MCF 10A (cell line): ENCODE measurements at regions of chr4 and their contacts with region 1.

Region 1: DNA sequence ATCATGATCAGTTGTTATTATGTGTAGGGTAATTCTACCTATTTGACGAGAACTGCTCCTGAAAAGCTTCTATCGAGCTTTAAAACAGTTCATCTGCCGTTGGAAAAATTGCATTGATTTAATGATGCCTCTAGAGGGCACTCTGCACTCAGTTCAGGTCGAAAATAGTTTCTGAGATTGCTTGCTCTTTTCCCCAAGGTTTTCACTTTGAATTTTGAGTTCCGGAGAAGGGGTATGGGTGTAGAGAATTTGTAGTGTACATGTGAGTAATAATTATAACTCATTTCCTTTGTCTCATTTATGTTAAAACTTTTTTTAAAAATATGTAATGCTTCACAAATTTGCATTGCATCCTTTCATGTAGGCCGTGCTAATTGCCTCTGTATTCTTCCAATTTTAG is 28.4 kb upstream of the TNIP3 start:
- DNase-seq: peak; percentile 68
- H3K4me3 Mint-ChIP-seq: peak overlapping the region; percentile 69
- H3K27ac Mint-ChIP-seq: no peak overlapping the region
- H3K4me1 Mint-ChIP-seq: peaks cover 15% of the 10 kb centered on the region
- H3K27me3 Mint-ChIP-seq: no peaks in the 10 kb centered on the region
- CTCF ChIP-seq: peak; percentile 73

Region 2: GRCh38 chr4:120156120-120156718 is 1036.3 kb before region 1 on chr4:
- CTCF ChIA-PET with region 1: interaction called, 3 read pairs
- POLR2A ChIA-PET with region 1: no interaction called
- intact Hi-C with region 1: loop called (anchors 10 kb)
- DNase-seq: peak; percentile 75
- H3K4me3 Mint-ChIP-seq: no peak overlapping the region
- H3K27ac Mint-ChIP-seq: no peak overlapping the region
- H3K4me1 Mint-ChIP-seq: no peaks in the 10 kb centered on the region
- H3K27me3 Mint-ChIP-seq: no peaks in the 10 kb centered on the region
- CTCF ChIP-seq: peak; percentile 60

Region 3: GRCh38 chr4:120809518-120809917 is 383.0 kb before region 1 on chr4:
- CTCF ChIA-PET with region 1: no interaction called
- POLR2A ChIA-PET with region 1: no interaction called
- intact Hi-C with region 1: no loop called
- DNase-seq: no peak
- H3K4me3 Mint-ChIP-seq: no peak overlapping the region
- H3K27ac Mint-ChIP-seq: no peak overlapping the region
- H3K4me1 Mint-ChIP-seq: peaks cover 5% of the 10 kb centered on the region
- H3K27me3 Mint-ChIP-seq: no peaks in the 10 kb centered on the region
- CTCF ChIP-seq: peak; percentile 12

Region 4: GRCh38 chr4:121003863-121004262 is 188.6 kb before region 1 on chr4:
- CTCF ChIA-PET with region 1: no interaction called
- POLR2A ChIA-PET with region 1: no interaction called
- intact Hi-C with region 1: no loop called
- DNase-seq: no peak
- H3K4me3 Mint-ChIP-seq: no peak overlapping the region
- H3K27ac Mint-ChIP-seq: no peak overlapping the region
- H3K4me1 Mint-ChIP-seq: no peaks in the 10 kb centered on the region
- H3K27me3 Mint-ChIP-seq: no peaks in the 10 kb centered on the region
- CTCF ChIP-seq: no peak

Region 5: GRCh38 chr4:121219227-121219626 is 26.7 kb after region 1 on chr4:
- CTCF ChIA-PET with region 1: interaction called, 15 read pairs
- POLR2A ChIA-PET with region 1: interaction called, 3 read pairs
- intact Hi-C with region 1: no loop called
- DNase-seq: no peak
- H3K4me3 Mint-ChIP-seq: no peak overlapping the region
- H3K27ac Mint-ChIP-seq: no peak overlapping the region
- H3K4me1 Mint-ChIP-seq: no peaks in the 10 kb centered on the region
- H3K27me3 Mint-ChIP-seq: no peaks in the 10 kb centered on the region
- CTCF ChIP-seq: no peak

Region 6: DNA sequence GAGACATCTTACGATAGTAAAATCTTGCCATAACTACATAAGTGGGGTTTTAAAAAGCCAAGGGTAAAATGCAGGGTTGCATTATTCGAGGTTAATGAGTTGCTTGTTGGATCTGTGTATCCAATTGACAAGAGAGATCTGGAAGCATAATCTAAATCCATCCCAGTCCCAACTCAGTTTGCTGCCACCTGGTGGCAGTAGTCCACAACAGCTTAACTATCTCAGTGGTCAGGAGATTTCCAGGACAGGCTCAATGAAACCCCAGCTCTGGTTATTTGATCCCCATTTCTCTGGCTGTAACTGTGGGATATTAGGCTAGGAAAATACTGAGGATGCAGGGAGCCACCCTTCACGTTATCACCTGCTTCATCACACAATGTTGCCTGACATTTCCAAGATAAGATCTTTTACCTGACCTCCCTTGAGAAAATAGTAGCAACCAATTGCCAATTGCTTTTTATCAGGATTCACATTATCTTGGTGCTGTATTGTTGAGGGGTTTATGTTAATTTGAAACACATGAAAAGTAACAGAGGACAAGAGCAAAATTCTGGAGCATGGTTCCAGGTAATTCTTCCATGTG is 59.8 kb after region 1 on chr4:
- CTCF ChIA-PET with region 1: interaction called, 113 read pairs
- POLR2A ChIA-PET with region 1: no interaction called
- intact Hi-C with region 1: loop called (anchors 1 kb)
- DNase-seq: peak; percentile 85
- H3K4me3 Mint-ChIP-seq: no peak overlapping the region
- H3K27ac Mint-ChIP-seq: no peak overlapping the region
- H3K4me1 Mint-ChIP-seq: peaks cover 14% of the 10 kb centered on the region
- H3K27me3 Mint-ChIP-seq: no peaks in the 10 kb centered on the region
- CTCF ChIP-seq: peak; percentile 66

Region 7: DNA sequence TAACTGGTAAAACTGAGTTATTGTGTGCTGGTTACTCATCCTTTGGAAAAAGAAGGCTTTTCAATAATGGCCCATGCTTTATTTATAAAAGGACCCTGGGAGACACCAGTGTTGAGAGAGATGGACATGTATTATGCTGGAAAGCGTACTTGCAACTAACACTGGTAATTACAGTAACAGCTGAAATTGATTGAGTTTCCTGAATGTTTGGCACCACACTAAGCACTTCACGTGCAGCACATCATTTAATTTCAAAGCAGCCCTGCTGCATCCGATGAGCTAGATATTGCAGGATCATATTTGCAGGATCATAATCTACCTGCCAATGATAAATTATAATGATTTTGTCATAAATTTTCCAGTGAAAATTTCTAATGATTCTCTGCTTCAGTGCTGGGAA is 106.9 kb after region 1 on chr4:
- CTCF ChIA-PET with region 1: interaction called, 21 read pairs
- POLR2A ChIA-PET with region 1: no interaction called
- intact Hi-C with region 1: no loop called
- DNase-seq: no peak
- H3K4me3 Mint-ChIP-seq: no peak overlapping the region
- H3K27ac Mint-ChIP-seq: no peak overlapping the region
- H3K4me1 Mint-ChIP-seq: no peaks in the 10 kb centered on the region
- H3K27me3 Mint-ChIP-seq: no peaks in the 10 kb centered on the region
- CTCF ChIP-seq: no peak

Region 8: GRCh38 chr4:121370729-121371325 is 178.3 kb after region 1 on chr4:
- CTCF ChIA-PET with region 1: interaction called, 21 read pairs
- POLR2A ChIA-PET with region 1: no interaction called
- intact Hi-C with region 1: loop called (anchors 2 kb)
- DNase-seq: peak; percentile 68
- H3K4me3 Mint-ChIP-seq: no peak overlapping the region
- H3K27ac Mint-ChIP-seq: no peak overlapping the region
- H3K4me1 Mint-ChIP-seq: peaks cover 26% of the 10 kb centered on the region
- H3K27me3 Mint-ChIP-seq: no peaks in the 10 kb centered on the region
- CTCF ChIP-seq: peak; percentile 46

Region 9: GRCh38 chr4:121656269-121656641 is 463.8 kb after region 1 on chr4:
- CTCF ChIA-PET with region 1: interaction called, 3 read pairs
- POLR2A ChIA-PET with region 1: no interaction called
- intact Hi-C with region 1: loop called (anchors 2 kb)
- DNase-seq: peak; percentile 66
- H3K4me3 Mint-ChIP-seq: no peak overlapping the region
- H3K27ac Mint-ChIP-seq: no peak overlapping the region
- H3K4me1 Mint-ChIP-seq: peaks cover 8% of the 10 kb centered on the region
- H3K27me3 Mint-ChIP-seq: no peaks in the 10 kb centered on the region
- CTCF ChIP-seq: peak; percentile 30